ENCODE measurements at regions of chr14 and their contacts with region 1.

Region 1: GRCh38 chr14:68816262-68816942 is 23.5 kb upstream of the ZFP36L1 start:
- DNase-seq: peak; percentile 92 to 93
- ATAC-seq: peak; percentile 90 to 92
- H3K4me3 ChIP-seq: peak overlapping the region; percentile 45
- H3K27ac ChIP-seq: peak overlapping the region; percentile 97 to 100
- H3K4me1 ChIP-seq: peaks cover 47% of the 10 kb centered on the region
- CTCF ChIP-seq: peak; percentile 94
- EP300 ChIP-seq: 0 out of 5 replicates have a peak, but pooled peaks of 1 of the 2 experiments have one; percentile 1
- POLR2A ChIP-seq: peak; percentile 48
- RAD21 ChIP-seq: peak; percentile 98 to 99

Region 2: DNA sequence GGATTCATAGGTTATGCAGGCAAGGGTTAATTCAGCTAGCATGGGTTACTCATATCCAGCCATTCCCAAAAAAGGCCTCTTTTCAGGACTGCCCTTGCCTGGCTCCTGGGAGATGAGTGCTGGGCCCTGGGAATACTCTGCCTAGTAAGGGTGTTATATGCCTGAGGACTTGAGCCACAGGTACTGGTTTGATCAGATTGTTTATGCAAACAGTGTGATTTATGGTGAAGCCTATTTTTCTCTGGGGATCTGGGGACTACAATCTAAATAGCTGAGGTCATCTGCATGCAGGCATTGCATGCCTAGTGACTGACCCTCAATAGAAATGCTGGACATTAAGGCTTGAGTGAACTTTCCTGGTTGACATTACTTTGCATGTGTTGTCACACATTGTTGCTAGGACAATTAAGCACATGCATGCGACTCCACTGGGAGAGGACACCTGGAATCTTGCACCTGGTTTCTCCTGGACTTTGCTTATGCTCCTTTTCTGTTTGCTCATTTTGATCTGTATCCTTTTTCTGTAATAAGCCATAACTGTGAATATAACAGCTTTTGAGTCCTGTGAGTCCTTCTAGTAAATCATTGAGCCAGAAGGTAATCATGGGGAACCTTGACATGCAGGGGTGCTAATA is 923.8 kb before region 1 on chr14:
- CTCF ChIA-PET with region 1: interaction called, 75 read pairs
- POLR2A ChIA-PET with region 1: no interaction called
- DNase-seq: no peak
- ATAC-seq: no peak
- H3K4me3 ChIP-seq: no peak overlapping the region
- H3K27ac ChIP-seq: no peak overlapping the region
- H3K4me1 ChIP-seq: peaks cover 1% of the 10 kb centered on the region; the same call in 1 of the 3 replicates
- CTCF ChIP-seq: no peak
- EP300 ChIP-seq: no peak
- POLR2A ChIP-seq: no peak
- RAD21 ChIP-seq: no peak

Region 3: DNA sequence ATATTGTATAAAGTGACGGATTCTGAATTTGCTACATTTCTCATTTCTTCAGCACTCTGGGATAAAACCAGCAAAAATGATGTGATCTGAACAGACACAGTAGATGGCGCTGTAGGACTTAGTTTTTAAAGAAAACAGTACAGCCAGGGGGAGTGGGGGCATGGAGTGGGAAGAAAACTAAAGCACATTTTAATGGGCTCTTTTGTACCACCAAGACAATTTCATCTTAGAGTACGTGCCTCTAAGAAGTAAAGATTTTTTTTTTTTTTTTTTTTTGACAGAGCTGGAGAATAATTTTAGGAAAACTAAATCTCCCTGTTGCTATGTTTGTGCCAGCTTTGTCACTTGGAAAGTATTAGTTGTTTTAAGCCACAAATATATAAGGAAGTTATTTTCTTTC is 872.5 kb before region 1 on chr14:
- CTCF ChIA-PET with region 1: interaction called, 61 read pairs
- POLR2A ChIA-PET with region 1: interaction called, 6 read pairs
- DNase-seq: peak; percentile 44 to 92
- ATAC-seq: peak; percentile 88 to 89
- H3K4me3 ChIP-seq: no peak overlapping the region
- H3K27ac ChIP-seq: peak overlapping the region; percentile 82 to 86
- H3K4me1 ChIP-seq: peaks cover 51% of the 10 kb centered on the region
- CTCF ChIP-seq: peak; percentile 93
- EP300 ChIP-seq: peak in 1 of 2 experiments; percentile 18; a peak in 1 of 5 replicates
- POLR2A ChIP-seq: no peak
- RAD21 ChIP-seq: peak; percentile 96 to 98

Region 4: GRCh38 chr14:68248481-68249255 is 567.7 kb before region 1 on chr14:
- CTCF ChIA-PET with region 1: interaction called, 162 read pairs
- POLR2A ChIA-PET with region 1: interaction called, 3 read pairs
- DNase-seq: peak; percentile 61 to 86
- ATAC-seq: peak; percentile 81 to 84
- H3K4me3 ChIP-seq: no peak overlapping the region
- H3K27ac ChIP-seq: peak overlapping the region; percentile 95 to 97
- H3K4me1 ChIP-seq: peaks cover 76% of the 10 kb centered on the region
- CTCF ChIP-seq: peak; percentile 83
- EP300 ChIP-seq: no peak
- POLR2A ChIP-seq: no peak
- RAD21 ChIP-seq: peak; percentile 93 to 97

Region 5: GRCh38 chr14:68780358-68781160 is 35.8 kb before region 1 on chr14:
- CTCF ChIA-PET with region 1: interaction called, 85 read pairs
- POLR2A ChIA-PET with region 1: interaction called, 187 read pairs
- DNase-seq: peak in 1 of 2 experiments; percentile 53
- ATAC-seq: no peak
- H3K4me3 ChIP-seq: no peak overlapping the region
- H3K27ac ChIP-seq: peak overlapping the region; percentile 94 to 100
- H3K4me1 ChIP-seq: peaks cover 71% of the 10 kb centered on the region
- CTCF ChIP-seq: no peak
- EP300 ChIP-seq: no peak
- POLR2A ChIP-seq: no peak
- RAD21 ChIP-seq: no peak

Region 6: DNA sequence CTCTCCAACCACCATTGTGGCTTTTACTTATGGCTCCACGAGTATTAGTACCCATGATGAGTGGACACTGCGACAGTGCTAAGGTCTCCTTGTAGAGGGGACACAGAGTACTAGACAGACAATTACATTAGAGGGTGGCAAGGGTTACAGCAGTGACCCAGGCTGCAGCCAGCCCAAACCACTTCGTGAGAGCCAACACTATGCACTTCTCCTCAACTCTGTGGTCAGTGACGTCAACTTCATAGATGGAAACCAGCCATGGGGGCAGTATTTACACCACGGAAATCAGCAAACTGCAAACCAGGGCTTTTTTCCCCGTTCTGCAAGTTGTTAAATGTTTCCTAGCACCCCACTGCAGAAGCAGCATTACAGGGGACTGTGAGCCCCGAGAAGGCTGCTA is 38.0 kb after region 1 on chr14:
- CTCF ChIA-PET with region 1: no interaction called
- POLR2A ChIA-PET with region 1: no interaction called
- DNase-seq: no peak
- ATAC-seq: peak in 1 of 2 experiments; percentile 27; a peak in 2 of 6 replicates
- H3K4me3 ChIP-seq: no peak overlapping the region
- H3K27ac ChIP-seq: no peak overlapping the region
- H3K4me1 ChIP-seq: no peaks in the 10 kb centered on the region
- CTCF ChIP-seq: no peak
- EP300 ChIP-seq: no peak
- POLR2A ChIP-seq: no peak
- RAD21 ChIP-seq: no peak

Measured in A549 (cell line).